Activated naive CD4-positive, alpha-beta T cell treated with anti-CD3 and anti-CD28 coated beads for 36 hours (primary cell): ENCODE measurements at regions of chr16 and their contacts with region 1.

Region 1: GRCh38 chr16:11245988-11246387 is 10.0 kb downstream of the SOCS1 start:
- DNase-seq: peak; percentile 57
- H3K4me3 Mint-ChIP-seq: no peak overlapping the region
- H3K27ac Mint-ChIP-seq: no peak overlapping the region
- H3K4me1 Mint-ChIP-seq: peaks cover 42% of the 10 kb centered on the region
- H3K27me3 Mint-ChIP-seq: no peaks in the 10 kb centered on the region

Region 2: DNA sequence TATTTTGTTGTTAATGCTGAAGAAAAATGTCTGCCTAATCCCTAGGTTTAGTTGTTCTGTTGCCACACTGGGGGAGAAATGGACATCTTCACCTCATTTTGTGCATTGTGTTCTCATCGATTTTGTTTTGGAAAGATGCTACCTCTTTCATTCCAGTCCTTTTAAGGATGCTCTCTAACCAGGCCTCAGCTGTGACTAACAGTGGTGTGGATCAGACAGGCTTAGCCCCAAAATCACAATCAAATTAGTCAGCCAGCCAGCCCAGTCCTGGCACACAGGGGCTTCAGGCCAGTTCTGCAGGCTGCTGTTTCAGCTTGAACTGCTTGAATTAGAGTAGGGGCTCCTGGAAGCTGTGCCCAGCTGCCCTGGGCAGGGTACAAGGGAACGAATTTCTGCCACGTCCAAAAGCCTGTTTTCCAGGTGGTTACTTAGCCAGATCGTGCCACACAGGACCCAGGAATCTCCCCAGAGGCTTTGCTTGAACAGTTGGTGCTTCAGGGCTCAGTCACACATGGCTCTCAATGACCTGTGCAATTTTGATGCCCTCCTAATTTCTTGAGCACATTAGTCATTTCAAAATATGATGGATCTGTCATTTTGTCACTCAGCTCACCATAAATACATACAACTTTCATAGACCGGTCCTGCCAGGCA is 240.9 kb before region 1 on chr16:
- CTCF ChIA-PET with region 1: no interaction called
- intact Hi-C with region 1: no loop called
- DNase-seq: no peak
- H3K4me3 Mint-ChIP-seq: no peak overlapping the region
- H3K27ac Mint-ChIP-seq: no peak overlapping the region
- H3K4me1 Mint-ChIP-seq: peaks cover 3% of the 10 kb centered on the region
- H3K27me3 Mint-ChIP-seq: no peaks in the 10 kb centered on the region

Region 3: DNA sequence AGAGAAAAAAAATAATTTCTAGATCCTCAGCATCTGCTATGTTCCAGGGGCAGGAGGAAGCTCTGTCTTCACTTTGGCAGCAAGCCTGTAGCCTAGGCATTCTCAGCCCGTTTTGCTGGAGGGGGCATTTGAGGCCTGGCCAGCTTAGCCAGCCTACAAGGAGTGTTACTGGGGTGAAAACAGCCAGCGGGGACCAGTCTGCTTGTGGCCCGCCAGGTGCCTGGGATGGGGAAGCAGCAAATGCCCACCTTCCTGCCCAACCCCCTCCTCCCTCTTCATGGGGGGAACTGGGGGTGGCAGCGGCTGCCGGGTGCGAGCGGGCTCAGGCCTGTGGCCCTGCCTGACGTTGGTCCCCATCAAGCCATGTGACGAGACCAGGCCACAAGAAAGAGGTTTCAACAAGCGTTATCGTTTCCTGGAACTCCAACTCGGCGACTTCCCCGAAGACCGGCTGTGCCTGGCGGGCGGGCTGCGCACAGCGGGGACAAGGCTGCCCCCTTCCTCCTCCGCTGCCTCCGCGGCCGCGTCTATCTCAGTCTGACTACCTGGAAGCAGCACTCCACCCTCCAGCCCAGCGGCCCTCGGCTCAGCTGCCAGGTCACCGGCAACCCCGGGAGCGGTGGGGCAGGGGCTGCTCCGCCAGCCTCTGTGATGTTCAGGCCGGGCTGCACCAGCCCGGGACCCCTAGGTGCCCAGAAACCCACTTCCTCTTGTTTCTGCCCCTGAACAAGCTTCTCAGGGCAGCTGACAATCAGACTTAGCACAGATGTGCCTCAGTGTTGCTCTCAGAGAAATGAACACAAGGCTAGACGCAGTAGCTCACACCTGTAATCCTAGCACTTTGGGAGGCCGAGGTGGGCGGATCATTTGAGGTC is 12.9 kb before region 1 on chr16:
- CTCF ChIA-PET with region 1: interaction called, 6 read pairs
- intact Hi-C with region 1: loop called (anchors 1 kb)
- DNase-seq: peak; percentile 97
- H3K4me3 Mint-ChIP-seq: peak overlapping the region; percentile 57
- H3K27ac Mint-ChIP-seq: peak overlapping the region; percentile 99
- H3K4me1 Mint-ChIP-seq: peaks cover 55% of the 10 kb centered on the region
- H3K27me3 Mint-ChIP-seq: no peaks in the 10 kb centered on the region